PC-9 (cell line): ENCODE measurements at regions of chr1 and their contacts with region 1.

Region 1: GRCh38 chr1:113452921-113453770 is 62.8 kb downstream of the MAGI3 start:
- DNase-seq: peak in 1 of 2 experiments; percentile 50
- H3K4me3 ChIP-seq: no peak overlapping the region
- H3K27ac ChIP-seq: no peak overlapping the region
- H3K4me1 ChIP-seq: peaks cover 20% of the 10 kb centered on the region
- H3K27me3 ChIP-seq: no peaks in the 10 kb centered on the region
- CTCF ChIP-seq: peak; percentile 81

Region 2: DNA sequence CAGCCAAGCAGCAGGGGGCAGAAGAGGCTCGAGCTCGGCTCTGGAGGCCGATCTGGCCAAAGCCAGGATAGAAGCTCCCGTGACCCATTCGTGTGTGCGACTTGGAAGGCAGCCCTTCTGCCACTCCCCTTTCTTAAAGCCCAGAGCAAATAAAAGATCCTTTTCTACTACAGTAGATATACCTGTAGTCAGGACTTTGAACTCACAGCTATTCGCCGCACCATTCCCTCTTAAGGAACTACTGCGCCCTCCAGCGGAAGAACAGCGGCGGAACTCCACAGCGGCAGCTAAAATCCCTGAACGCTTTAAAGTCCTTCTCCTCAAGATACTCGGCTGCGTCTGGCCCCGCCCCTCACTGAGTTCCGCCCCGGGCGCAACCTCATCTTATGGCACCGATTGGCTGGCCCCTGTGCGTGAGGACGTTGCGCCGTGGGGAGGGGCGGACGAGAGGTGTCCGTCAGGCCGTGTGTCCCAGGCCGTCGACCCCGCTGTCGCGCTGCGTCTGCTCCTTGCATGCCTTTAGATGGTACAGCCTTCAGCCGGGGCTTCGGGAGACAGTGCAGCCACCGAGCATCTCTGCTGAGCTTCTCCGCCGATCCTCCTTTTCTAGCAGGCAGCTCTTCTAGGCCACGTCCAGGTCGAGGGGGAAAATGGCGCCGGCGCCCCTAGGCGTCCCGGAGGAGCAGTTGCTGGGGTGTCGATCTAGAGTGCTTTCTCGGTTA is 380.2 kb before region 1 on chr1 and contains the start of gene LRIG2:
- CTCF ChIA-PET with region 1: no interaction called
- POLR2A ChIA-PET with region 1: no interaction called
- intact Hi-C with region 1: no loop called
- DNase-seq: peak; percentile 99
- H3K4me3 ChIP-seq: peak within 1 kb of the TSS; percentile 85
- H3K27ac ChIP-seq: peak within 1 kb of the TSS; percentile 78
- H3K4me1 ChIP-seq: peaks cover 20% of the 10 kb centered on the region
- H3K27me3 ChIP-seq: no peaks in the 10 kb centered on the region
- CTCF ChIP-seq: peak; percentile 94
- total RNA-seq, gene LRIG2: 9.4 and 10.6 TPM in 2 replicates

Region 3: DNA sequence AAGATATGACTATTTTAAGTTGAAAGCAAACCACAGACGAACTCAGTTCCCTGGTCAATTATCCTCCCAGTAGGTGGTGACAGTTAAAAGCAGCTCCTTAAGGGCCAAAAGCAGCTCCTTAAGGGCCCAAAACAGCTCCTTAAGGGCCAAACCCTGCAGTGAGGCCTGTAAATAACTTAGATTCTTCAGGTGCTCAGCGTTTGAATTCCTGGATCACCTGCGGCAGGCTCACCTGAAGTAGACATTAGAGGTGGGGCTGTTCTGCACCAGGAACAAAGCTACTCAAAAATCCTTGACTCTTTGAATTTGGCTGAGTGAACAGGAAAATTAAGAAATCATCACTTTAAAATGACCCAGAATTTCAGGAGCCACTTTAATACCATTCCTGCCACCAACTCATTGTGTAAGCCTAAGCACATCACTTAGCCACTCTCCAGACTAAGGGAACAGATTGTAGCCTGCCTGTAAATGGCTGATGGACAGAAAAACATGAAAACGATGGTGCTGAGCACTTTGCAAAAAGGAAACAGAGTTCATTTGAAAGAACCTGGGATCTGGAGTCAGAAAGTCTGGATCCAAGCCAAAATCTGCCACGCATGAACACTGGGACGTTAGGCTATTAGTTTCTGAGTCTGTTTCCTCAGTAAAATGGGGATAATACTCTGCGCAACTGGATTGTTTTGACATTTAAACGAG is 253.2 kb before region 1 on chr1:
- CTCF ChIA-PET with region 1: no interaction called
- POLR2A ChIA-PET with region 1: no interaction called
- intact Hi-C with region 1: loop called (anchors 10 kb)
- DNase-seq: peak in 1 of 2 experiments; percentile 89
- H3K4me3 ChIP-seq: no peak overlapping the region
- H3K27ac ChIP-seq: peak overlapping the region; percentile 5
- H3K4me1 ChIP-seq: peaks cover 42% of the 10 kb centered on the region
- H3K27me3 ChIP-seq: no peaks in the 10 kb centered on the region
- CTCF ChIP-seq: no peak

Region 4: DNA sequence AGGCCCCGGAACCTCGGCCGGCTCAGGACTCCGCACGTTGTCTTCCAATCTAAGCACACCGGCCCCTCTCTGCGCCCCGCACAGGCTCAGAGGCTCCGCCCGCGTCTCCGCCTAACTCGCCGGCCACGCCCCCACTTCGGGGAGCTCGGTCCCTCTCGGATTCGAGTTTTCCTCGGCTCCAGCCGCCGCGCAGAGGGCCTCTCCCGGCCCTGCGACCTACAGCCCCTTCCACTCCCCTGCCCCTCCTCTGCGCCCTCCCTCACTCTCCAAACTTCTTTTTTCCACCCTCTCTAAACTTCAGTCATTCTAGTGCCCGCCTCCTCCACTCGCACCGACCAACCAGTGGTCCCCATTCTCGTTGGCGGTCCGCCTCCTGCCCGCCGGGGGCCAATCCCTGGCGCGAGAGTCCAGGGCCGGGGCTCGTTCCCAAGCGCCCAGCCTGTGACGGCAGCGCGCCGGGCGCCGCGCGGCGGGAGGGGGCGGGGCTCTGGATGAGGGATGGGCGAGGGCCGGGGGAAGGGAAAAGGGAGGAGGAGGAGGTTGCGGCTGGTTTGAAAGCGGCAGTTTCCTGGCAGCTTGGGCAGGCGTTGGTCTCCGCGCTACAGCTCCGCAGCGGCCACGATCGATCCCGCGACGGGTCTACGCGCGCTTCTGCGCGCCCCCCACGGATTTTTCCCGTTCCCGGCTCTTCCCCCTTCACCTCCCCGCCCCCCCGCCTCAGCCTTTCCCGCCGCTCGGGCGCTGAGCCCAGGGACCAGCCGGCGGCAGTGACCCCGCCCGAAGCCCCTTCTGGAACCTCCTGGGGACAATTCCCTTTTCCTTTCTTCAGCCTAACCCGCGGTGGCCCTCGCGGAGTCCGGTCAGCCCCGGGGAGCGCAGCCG is 63.0 kb before region 1 on chr1 and contains the start of gene MAGI3:
- CTCF ChIA-PET with region 1: interaction called, 3 read pairs
- POLR2A ChIA-PET with region 1: interaction called, 3 read pairs
- intact Hi-C with region 1: loop called (anchors 2 kb)
- DNase-seq: peak; percentile 97 to 99
- H3K4me3 ChIP-seq: peak within 1 kb of the TSS; percentile 78
- H3K27ac ChIP-seq: peak within 1 kb of the TSS; percentile 65
- H3K4me1 ChIP-seq: peaks cover 57% of the 10 kb centered on the region
- H3K27me3 ChIP-seq: no peaks in the 10 kb centered on the region
- CTCF ChIP-seq: no peak
- total RNA-seq, gene MAGI3: 17.3 and 18.5 TPM in 2 replicates

Region 5: GRCh38 chr1:113434081-113434873 is 18.9 kb before region 1 on chr1:
- CTCF ChIA-PET with region 1: no interaction called
- POLR2A ChIA-PET with region 1: interaction called, 25 read pairs
- intact Hi-C with region 1: no loop called
- DNase-seq: no peak
- H3K4me3 ChIP-seq: no peak overlapping the region
- H3K27ac ChIP-seq: no peak overlapping the region
- H3K4me1 ChIP-seq: no peaks in the 10 kb centered on the region
- H3K27me3 ChIP-seq: no peaks in the 10 kb centered on the region
- CTCF ChIP-seq: no peak

Region 6: GRCh38 chr1:113519556-113519955 is 66.4 kb after region 1 on chr1:
- CTCF ChIA-PET with region 1: interaction called, 3 read pairs
- POLR2A ChIA-PET with region 1: no interaction called
- intact Hi-C with region 1: loop called (anchors 10 kb)
- DNase-seq: no peak
- H3K4me3 ChIP-seq: no peak overlapping the region
- H3K27ac ChIP-seq: no peak overlapping the region
- H3K4me1 ChIP-seq: peaks cover 16% of the 10 kb centered on the region
- H3K27me3 ChIP-seq: no peaks in the 10 kb centered on the region
- CTCF ChIP-seq: no peak